Posterior vena cava (tissue), 2 donors: ENCODE measurements at regions of chr13 and their contacts with region 1.

Region 1: DNA sequence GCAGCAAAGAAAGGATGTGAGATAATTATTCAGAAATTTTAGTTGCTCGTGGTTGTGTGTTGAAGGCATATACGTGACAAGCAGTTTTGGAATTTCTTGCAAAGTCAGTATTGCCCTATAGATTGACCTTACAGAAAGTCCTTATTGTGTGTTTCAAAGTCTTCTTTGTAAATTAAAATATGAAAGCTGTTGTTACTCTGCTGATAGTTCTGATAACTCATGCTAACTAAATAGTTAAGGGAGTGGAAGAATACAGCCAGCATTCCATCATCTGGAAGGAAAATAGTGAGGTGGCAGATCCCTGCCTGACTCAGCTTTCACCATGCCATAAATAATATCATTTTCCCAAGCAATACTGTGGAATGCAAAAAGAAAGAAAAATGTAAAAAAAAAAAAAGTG is 27.2 kb downstream of the WASF3 start:
- DNase-seq: no peak

Region 2: GRCh38 chr13:26551255-26551860 is 33.4 kb before region 1 on chr13:
- intact Hi-C with region 1: loop called in 1 of 2 experiments (anchors 1 kb)
- DNase-seq: no peak